Endothelial cell of umbilical vein (primary cell): ENCODE measurements at regions of chr14 and their contacts with region 1.

Region 1: DNA sequence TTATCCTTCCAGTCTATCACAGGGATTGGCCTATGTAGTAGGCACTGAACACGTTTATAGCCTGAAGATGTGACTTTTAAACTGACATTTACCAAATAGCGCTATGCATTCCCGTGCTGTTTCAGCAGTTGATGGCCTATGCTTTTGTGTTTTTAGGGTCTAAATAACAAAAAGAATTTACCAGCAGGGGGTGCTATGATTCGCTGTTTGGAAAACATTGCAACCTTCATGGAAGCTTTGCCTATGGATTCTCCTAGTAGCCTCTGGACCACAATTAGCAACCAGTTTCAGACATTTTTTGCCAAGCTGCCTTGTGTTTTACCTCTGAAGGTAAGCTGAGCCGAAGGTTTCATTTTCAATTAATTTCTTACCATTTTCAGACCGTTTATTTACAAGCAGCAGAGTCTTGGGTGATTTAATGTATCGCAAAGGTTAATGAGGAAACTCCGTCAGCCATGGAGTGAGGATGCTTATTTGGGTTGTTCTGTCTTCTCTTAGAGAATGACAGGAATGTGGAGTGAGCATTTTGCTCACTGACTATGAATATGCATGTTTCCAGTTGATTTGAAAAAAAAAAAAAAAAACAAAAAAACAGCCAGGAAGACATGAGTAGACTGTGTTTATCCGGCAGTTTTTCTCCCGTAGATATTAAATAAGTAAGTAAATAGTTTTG is 133.1 kb downstream of the PRIMA1 start:
- DNase-seq: peak; percentile 22
- H3K4me3 ChIP-seq: no peak overlapping the region
- H3K27ac ChIP-seq: no peak overlapping the region
- H3K4me1 ChIP-seq: no peaks in the 10 kb centered on the region
- H3K27me3 ChIP-seq: no peaks in the 10 kb centered on the region
- CTCF ChIP-seq: peak; percentile 19 to 29
- POLR2A ChIP-seq: no peak

Region 2: GRCh38 chr14:93160353-93160801 is 494.8 kb before region 1 on chr14:
- CTCF ChIA-PET with region 1: no interaction called
- POLR2A ChIA-PET with region 1: no interaction called
- dilution Hi-C with region 1: no loop called
- intact Hi-C with region 1: no loop called
- DNase-seq: no peak
- H3K4me3 ChIP-seq: no peak overlapping the region
- H3K27ac ChIP-seq: no peak overlapping the region
- H3K4me1 ChIP-seq: no peaks in the 10 kb centered on the region
- H3K27me3 ChIP-seq: no peaks in the 10 kb centered on the region
- CTCF ChIP-seq: peak; percentile 13 to 28
- POLR2A ChIP-seq: no peak

Region 3: GRCh38 chr14:93892923-93893558 is 237.8 kb after region 1 on chr14:
- CTCF ChIA-PET with region 1: no interaction called
- POLR2A ChIA-PET with region 1: no interaction called
- dilution Hi-C with region 1: no loop called
- intact Hi-C with region 1: loop called (anchors 1 kb)
- DNase-seq: peak; percentile 38
- H3K4me3 ChIP-seq: no peak overlapping the region
- H3K27ac ChIP-seq: no peak overlapping the region
- H3K4me1 ChIP-seq: no peaks in the 10 kb centered on the region
- H3K27me3 ChIP-seq: no peaks in the 10 kb centered on the region
- CTCF ChIP-seq: peak; percentile 89 to 96
- POLR2A ChIP-seq: no peak

Region 4: DNA sequence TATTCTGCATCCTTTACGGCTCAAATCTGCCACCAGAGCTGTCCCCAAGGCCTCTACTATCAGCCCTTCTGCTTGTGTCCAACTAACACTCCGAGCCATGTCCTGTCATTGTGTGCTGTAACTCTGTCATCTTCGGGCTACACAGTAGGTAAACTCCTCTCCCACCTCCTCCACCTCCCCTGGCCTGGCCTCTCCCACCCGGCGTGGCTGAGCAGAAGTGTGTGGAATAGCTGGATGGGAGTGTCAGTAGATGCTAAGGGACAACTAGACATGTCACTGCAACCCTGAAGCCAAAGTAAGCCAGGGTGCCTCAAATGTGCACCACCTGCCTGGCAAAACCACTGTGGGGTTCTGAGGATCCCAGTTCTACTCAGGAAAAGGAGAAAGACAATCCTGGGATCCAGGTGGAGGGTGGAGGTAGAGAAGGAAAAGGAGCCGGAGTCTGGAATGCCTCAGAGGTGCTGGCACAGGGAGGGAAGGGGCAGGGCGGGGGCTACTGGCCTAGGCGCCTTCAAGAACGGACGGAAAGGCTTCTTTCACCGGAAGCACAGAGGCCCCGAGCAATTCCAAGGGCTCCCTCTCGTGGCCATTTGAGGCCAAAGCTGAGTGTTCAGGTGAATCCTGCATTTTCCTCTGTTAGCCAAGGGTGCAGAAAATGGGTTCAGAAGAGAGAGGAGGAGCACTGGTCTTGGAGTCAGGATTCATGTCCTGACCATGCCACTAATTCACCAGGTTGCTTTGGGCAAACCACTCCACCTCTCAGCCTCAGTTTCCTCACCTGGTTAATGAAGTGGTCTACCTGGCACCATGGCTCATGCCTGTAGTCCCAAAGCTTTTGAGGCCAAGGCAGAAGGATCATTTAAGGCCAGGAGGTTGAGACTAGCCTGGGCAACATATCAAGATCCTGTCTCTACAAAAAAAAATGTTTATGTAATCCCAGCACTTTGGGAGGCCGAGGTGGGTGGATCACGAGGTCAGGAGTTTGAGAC is 251.4 kb after region 1 on chr14:
- CTCF ChIA-PET with region 1: no interaction called
- POLR2A ChIA-PET with region 1: no interaction called
- dilution Hi-C with region 1: no loop called
- intact Hi-C with region 1: loop called (anchors 1 kb)
- DNase-seq: no peak
- H3K4me3 ChIP-seq: no peak overlapping the region
- H3K27ac ChIP-seq: no peak overlapping the region
- H3K4me1 ChIP-seq: no peaks in the 10 kb centered on the region
- H3K27me3 ChIP-seq: no peaks in the 10 kb centered on the region
- CTCF ChIP-seq: peak; percentile 50 to 60
- POLR2A ChIP-seq: no peak

Region 5: DNA sequence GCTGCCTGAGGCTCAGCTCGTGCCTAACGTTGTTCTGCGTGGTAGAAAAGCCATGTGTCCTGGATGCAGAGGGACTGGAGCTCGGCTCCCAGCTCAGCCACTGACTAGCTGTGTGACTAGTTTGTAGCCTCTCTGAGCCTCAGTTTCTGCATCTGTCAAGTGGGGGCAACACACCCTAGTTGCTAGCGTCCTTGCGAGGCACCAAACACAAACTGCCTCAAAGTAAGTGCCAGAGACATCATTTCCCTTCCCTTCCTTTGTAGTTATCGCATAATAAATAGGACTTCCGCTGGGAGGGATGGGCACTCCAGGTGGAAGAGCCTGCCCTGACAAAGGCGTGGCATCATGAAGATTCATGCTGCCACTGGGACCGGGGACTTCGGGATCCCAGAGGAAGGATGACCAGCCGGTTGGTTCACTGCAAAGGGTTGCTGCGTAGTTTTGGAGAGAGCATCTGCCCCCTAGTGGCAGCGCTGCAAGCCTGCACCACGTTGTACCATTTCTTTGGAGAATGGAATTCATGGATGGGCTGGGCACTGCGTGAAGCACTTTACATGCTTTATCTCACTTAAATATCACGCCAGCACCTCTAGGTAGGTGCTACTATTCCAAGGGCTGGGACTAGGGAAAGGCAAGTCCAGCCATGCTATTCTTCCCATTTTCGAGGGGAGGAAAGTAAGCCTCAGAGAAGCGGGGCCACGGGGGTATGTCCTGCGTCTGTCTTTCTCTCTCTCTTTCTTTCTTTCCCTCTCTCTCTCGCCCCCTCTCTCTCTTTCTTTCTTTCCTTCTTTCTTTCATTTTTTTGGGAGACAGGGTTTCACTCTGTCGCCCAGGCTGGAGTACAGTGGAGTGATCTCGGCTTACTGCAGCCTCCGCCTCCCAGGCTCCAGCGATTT is 346.5 kb after region 1 on chr14:
- CTCF ChIA-PET with region 1: no interaction called
- POLR2A ChIA-PET with region 1: no interaction called
- dilution Hi-C with region 1: no loop called
- intact Hi-C with region 1: loop called (anchors 10 kb)
- DNase-seq: peak; percentile 49
- H3K4me3 ChIP-seq: no peak overlapping the region
- H3K27ac ChIP-seq: no peak overlapping the region
- H3K4me1 ChIP-seq: no peaks in the 10 kb centered on the region
- H3K27me3 ChIP-seq: no peaks in the 10 kb centered on the region
- CTCF ChIP-seq: peak; percentile 93 to 96
- POLR2A ChIP-seq: no peak